Activated naive CD4-positive, alpha-beta T cell treated with anti-CD3 and anti-CD28 coated beads for 36 hours (primary cell): ENCODE measurements at regions of chr1 and their contacts with region 1.

Region 1: GRCh38 chr1:19762175-19762779 is 37.4 kb downstream of the TMCO4 start:
- DNase-seq: peak; percentile 52
- H3K4me3 Mint-ChIP-seq: no peak overlapping the region
- H3K27ac Mint-ChIP-seq: no peak overlapping the region
- H3K4me1 Mint-ChIP-seq: peaks cover 16% of the 10 kb centered on the region
- H3K27me3 Mint-ChIP-seq: no peaks in the 10 kb centered on the region

Region 2: GRCh38 chr1:19811206-19811851 is 49.1 kb after region 1 on chr1:
- CTCF ChIA-PET with region 1: interaction called, 9 read pairs
- intact Hi-C with region 1: loop called (anchors 1 kb)
- DNase-seq: peak; percentile 74
- H3K4me3 Mint-ChIP-seq: no peak overlapping the region
- H3K27ac Mint-ChIP-seq: no peak overlapping the region
- H3K4me1 Mint-ChIP-seq: no peaks in the 10 kb centered on the region
- H3K27me3 Mint-ChIP-seq: no peaks in the 10 kb centered on the region